ENCODE measurements at regions of chr7 and their contacts with region 1.

Region 1: DNA sequence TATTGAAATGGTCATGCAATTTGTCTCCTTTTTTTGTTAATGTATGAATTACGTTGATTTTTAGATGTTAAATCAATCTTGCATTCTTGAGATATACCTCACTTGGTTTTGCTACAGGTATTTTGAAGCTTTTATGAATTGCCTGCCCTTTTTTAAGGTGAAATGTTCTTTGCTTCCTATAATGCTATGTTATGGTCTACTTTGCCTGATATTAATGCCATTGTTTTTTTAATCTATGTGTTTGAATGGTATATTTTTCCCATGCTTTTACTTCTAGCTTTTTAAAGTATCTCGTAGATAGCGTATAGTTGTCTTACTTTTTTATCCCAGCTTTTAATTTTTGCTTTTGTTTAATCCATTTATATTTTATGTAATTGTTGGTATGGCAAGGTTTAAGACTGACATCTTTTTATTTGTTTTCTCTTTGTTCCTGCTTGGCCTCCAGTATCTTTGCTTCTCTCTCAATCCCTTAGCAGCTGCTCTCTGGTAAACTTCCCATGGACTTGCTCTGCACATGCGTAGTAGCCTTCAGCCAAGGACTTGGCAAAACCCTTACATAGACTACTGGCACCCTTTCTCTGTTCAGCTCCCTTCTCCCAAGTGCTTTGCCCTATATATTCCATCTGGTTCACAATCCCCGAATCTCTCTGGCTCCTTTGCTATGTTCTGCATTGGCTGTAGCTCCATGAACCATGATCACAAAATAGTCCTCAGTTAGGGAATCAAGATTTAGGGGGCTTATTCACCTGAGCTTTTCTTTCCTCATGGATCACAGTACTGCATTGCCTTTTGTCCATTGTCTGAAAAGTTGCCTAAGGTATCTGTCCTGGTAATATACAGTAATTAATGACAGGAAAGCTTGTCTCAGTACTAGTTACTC is 8.4 kb downstream of the TRIM24 start:
- DNase-seq: no peak
- H3K4me3 ChIP-seq: peak overlapping the region in 1 of 4 experiments; percentile 16; a peak in 2 of 8 replicates
- H3K27ac ChIP-seq: no peak overlapping the region
- H3K4me1 ChIP-seq: peaks cover 0 to 24% (median 2%) of the 10 kb centered on the region in 4 experiments; a peak in 5 of 7 replicates
- H3K27me3 ChIP-seq: no peaks in the 10 kb centered on the region
- CTCF ChIP-seq: no peak
- EP300 ChIP-seq: no peak
- POLR2A ChIP-seq: no peak
- RAD21 ChIP-seq: no peak

Region 2: GRCh38 chr7:138431517-138431916 is 37.0 kb before region 1 on chr7:
- CTCF ChIA-PET with region 1: no interaction called
- POLR2A ChIA-PET with region 1: no interaction called
- DNase-seq: no peak
- H3K4me3 ChIP-seq: 0 out of 8 replicates have a peak overlapping the region, but pooled peaks of 1 of the 4 experiments have one; percentile 17
- H3K27ac ChIP-seq: no peak overlapping the region
- H3K4me1 ChIP-seq: peaks cover 0 to 16% (median 6%) of the 10 kb centered on the region in 4 experiments; a peak in 5 of 7 replicates
- H3K27me3 ChIP-seq: no peaks in the 10 kb centered on the region
- CTCF ChIP-seq: no peak
- EP300 ChIP-seq: no peak
- POLR2A ChIP-seq: no peak
- RAD21 ChIP-seq: no peak

Region 3: GRCh38 chr7:138478499-138478908 is 10.0 kb after region 1 on chr7:
- CTCF ChIA-PET with region 1: interaction called, 4 read pairs
- POLR2A ChIA-PET with region 1: interaction called, 17 read pairs
- DNase-seq: no peak
- H3K4me3 ChIP-seq: no peak overlapping the region
- H3K27ac ChIP-seq: no peak overlapping the region
- H3K4me1 ChIP-seq: peaks cover 0 to 24% (median 7%) of the 10 kb centered on the region in 4 experiments; a peak in 6 of 7 replicates
- H3K27me3 ChIP-seq: no peaks in the 10 kb centered on the region
- CTCF ChIP-seq: no peak
- EP300 ChIP-seq: no peak
- POLR2A ChIP-seq: no peak
- RAD21 ChIP-seq: no peak

Region 4: DNA sequence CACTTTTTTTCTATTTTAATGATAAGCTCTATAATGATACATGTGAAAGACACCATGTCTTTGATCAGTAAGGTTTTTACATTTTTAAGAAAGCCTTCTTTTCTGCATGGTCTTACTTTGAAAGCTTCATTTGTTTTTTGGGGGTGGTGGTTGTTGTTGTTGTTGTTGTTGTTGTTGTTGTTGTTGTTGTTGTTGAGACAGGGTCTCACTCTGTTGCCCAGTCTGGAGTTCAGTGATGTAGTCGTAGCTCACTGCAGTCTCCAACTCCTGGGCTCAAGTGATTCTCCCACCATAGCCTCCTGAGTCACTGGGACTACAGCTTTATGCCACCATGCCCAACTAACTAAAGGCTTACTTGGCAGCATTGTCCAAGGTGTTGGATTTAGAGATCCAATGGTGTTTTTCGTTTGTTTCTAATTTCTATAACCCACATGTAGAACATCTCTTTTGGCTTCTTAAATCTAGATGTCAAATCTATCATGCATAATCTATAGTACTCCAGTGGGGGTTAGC is 36.9 kb after region 1 on chr7:
- CTCF ChIA-PET with region 1: no interaction called
- POLR2A ChIA-PET with region 1: interaction called, 10 read pairs
- DNase-seq: no peak
- H3K4me3 ChIP-seq: no peak overlapping the region
- H3K27ac ChIP-seq: no peak overlapping the region
- H3K4me1 ChIP-seq: peaks cover 0 to 5% (median 0%) of the 10 kb centered on the region in 4 experiments; a peak in 2 of 7 replicates
- H3K27me3 ChIP-seq: no peaks in the 10 kb centered on the region
- CTCF ChIP-seq: no peak
- EP300 ChIP-seq: no peak
- POLR2A ChIP-seq: no peak
- RAD21 ChIP-seq: no peak

Measured in H1 (cell line).